ENCODE measurements at regions of chr14 and their contacts with region 1.

Region 1: DNA sequence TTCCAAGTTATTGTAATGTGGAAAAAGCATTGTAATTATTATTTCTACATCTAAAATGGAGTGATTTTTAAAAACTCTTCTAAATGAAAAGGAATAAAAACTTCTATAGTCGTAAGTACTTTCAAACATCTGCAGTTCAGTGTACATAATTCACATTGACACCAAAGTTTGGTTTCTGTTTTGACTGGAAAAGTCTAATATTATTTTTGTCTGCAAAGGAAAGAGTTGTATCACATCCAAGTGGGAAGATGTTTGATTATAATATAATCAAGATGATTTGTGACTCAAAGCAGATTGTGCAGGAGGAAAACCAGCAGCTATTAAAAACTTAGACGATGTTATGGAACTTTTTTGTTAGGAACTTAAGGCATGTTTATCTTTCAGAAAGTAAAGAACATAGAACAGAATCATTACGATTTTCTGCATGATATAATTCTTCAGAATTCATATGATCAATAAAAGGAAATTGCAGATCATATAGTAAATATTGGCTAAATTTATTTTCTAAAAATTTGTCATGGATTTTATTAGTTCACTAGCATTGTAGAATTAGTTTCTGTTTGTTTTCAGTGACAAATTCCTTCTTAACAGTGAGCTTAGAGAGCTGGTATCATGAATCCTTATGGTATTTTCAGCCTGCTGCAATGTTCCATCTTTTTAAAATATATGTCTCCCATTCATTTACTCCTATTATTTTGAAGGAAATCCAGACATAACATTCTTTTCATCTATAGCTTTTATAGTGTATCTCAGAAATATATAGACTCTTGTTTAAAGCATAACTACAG is 145.8 kb downstream of the MIPOL1 start:
- DNase-seq: no peak
- ATAC-seq: no peak
- H3K4me3 ChIP-seq: no peak overlapping the region
- H3K4me3 Mint-ChIP-seq: no peak overlapping the region
- H3K27ac ChIP-seq: no peak overlapping the region
- H3K27ac Mint-ChIP-seq: no peak overlapping the region
- H3K4me1 ChIP-seq: no peaks in the 10 kb centered on the region
- H3K4me1 Mint-ChIP-seq: no peaks in the 10 kb centered on the region
- H3K27me3 ChIP-seq: no peaks in the 10 kb centered on the region
- H3K27me3 Mint-ChIP-seq: no peaks in the 10 kb centered on the region

Region 2: GRCh38 chr14:36835145-36835544 is 508.4 kb before region 1 on chr14:
- CTCF ChIA-PET with region 1: no interaction called
- POLR2A ChIA-PET with region 1: no interaction called
- intact Hi-C with region 1: no loop called
- DNase-seq: no peak
- ATAC-seq: no peak
- H3K4me3 ChIP-seq: no peak overlapping the region
- H3K4me3 Mint-ChIP-seq: no peak overlapping the region
- H3K27ac ChIP-seq: no peak overlapping the region
- H3K27ac Mint-ChIP-seq: no peak overlapping the region
- H3K4me1 ChIP-seq: no peaks in the 10 kb centered on the region
- H3K4me1 Mint-ChIP-seq: no peaks in the 10 kb centered on the region
- H3K27me3 ChIP-seq: no peaks in the 10 kb centered on the region
- H3K27me3 Mint-ChIP-seq: peaks cover 0 to 18% (median 0%) of the 10 kb centered on the region in 5 donors

Region 3: DNA sequence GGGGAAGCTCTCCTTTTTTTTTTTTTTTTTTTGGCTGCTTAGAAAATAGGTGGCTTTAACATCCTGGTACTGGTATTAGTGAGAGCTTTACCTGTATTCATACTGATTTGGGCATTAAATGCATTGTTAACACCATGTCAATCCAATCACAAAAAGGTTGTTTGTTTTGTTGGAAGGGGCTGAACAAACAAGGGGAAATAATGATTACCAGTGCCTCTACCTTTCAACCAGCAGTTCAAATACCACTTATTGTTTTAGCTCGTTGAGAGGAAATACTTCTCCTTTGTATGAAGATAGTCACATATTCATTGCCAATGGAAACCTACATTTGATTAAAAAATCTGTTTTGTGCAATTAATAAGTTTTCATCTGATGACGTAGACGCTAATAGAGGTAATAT is 72.9 kb before region 1 on chr14:
- CTCF ChIA-PET with region 1: no interaction called
- POLR2A ChIA-PET with region 1: no interaction called
- intact Hi-C with region 1: no loop called
- DNase-seq: no peak
- ATAC-seq: no peak
- H3K4me3 ChIP-seq: no peak overlapping the region
- H3K4me3 Mint-ChIP-seq: no peak overlapping the region
- H3K27ac ChIP-seq: no peak overlapping the region
- H3K27ac Mint-ChIP-seq: no peak overlapping the region
- H3K4me1 ChIP-seq: no peaks in the 10 kb centered on the region
- H3K4me1 Mint-ChIP-seq: no peaks in the 10 kb centered on the region
- H3K27me3 ChIP-seq: no peaks in the 10 kb centered on the region
- H3K27me3 Mint-ChIP-seq: peaks cover 0 to 4% (median 0%) of the 10 kb centered on the region in 5 donors

Region 4: GRCh38 chr14:37369425-37369824 is 25.9 kb after region 1 on chr14:
- CTCF ChIA-PET with region 1: no interaction called
- POLR2A ChIA-PET with region 1: no interaction called
- intact Hi-C with region 1: loop called in 1 of 2 experiments (anchors 2 kb)
- DNase-seq: no peak
- ATAC-seq: no peak
- H3K4me3 ChIP-seq: no peak overlapping the region
- H3K4me3 Mint-ChIP-seq: no peak overlapping the region
- H3K27ac ChIP-seq: no peak overlapping the region
- H3K27ac Mint-ChIP-seq: no peak overlapping the region
- H3K4me1 ChIP-seq: no peaks in the 10 kb centered on the region
- H3K4me1 Mint-ChIP-seq: no peaks in the 10 kb centered on the region
- H3K27me3 ChIP-seq: no peaks in the 10 kb centered on the region
- H3K27me3 Mint-ChIP-seq: no peaks in the 10 kb centered on the region

Region 5: GRCh38 chr14:37384870-37385596 is 41.5 kb after region 1 on chr14:
- CTCF ChIA-PET with region 1: no interaction called
- POLR2A ChIA-PET with region 1: no interaction called
- intact Hi-C with region 1: no loop called
- DNase-seq: no peak
- ATAC-seq: no peak
- H3K4me3 ChIP-seq: no peak overlapping the region
- H3K4me3 Mint-ChIP-seq: no peak overlapping the region
- H3K27ac ChIP-seq: no peak overlapping the region
- H3K27ac Mint-ChIP-seq: no peak overlapping the region
- H3K4me1 ChIP-seq: no peaks in the 10 kb centered on the region
- H3K4me1 Mint-ChIP-seq: no peaks in the 10 kb centered on the region
- H3K27me3 ChIP-seq: no peaks in the 10 kb centered on the region
- H3K27me3 Mint-ChIP-seq: no peaks in the 10 kb centered on the region

Region 6: GRCh38 chr14:37508500-37508899 is 165.0 kb after region 1 on chr14:
- CTCF ChIA-PET with region 1: no interaction called
- POLR2A ChIA-PET with region 1: no interaction called
- intact Hi-C with region 1: no loop called
- DNase-seq: no peak
- ATAC-seq: no peak
- H3K4me3 ChIP-seq: no peak overlapping the region
- H3K4me3 Mint-ChIP-seq: no peak overlapping the region
- H3K27ac ChIP-seq: no peak overlapping the region
- H3K27ac Mint-ChIP-seq: no peak overlapping the region
- H3K4me1 ChIP-seq: no peaks in the 10 kb centered on the region
- H3K4me1 Mint-ChIP-seq: no peaks in the 10 kb centered on the region
- H3K27me3 ChIP-seq: no peaks in the 10 kb centered on the region
- H3K27me3 Mint-ChIP-seq: no peaks in the 10 kb centered on the region